Naive thymus-derived CD4-positive, alpha-beta T cell (primary cell): ENCODE measurements at regions of chr2 and their contacts with region 1.

Region 1: DNA sequence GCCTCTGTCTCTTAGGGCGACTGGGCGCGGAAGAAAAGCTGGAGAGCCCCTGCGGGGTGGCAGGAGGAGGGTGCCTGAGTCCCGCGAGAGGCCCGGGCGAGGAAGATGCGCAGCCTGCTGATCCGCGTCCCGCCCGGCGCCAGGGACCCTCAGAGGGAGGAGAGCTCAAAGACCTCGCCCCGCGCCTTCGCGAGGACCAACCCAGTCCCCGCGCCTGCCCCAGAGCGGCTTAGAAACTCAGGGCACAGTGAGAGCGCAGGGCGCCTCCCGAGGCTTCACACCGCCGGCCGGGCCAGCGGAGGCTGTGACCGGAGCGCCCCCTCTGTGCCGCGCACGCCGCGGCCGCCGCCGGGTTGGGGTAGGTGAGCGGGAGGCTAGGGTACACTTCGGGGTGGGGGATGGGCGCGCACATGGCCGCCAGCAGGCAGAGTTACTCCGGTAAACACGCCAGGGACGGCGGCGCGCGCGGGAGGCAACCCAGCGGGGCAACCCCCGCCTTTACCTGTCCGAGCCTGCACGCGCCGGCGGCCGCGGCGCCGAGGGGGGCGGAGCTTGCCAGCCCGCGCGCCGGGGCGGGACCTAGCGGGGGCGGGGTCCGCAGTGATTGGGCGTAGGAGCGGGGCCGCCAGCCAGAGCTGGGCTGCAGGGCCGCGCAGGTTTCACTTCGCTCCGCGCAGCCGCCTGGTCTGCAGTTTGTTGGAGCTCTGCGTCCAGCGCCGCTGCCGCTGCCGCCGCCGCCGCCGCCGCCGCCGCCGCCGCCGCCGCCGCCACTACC is at the start of gene BCL2L11:
- DNase-seq: peak; percentile 78 to 98 (median 85)
- ATAC-seq: peak; percentile 85
- H3K4me3 ChIP-seq: peak within 1 kb of the TSS; percentile 87
- H3K4me3 Mint-ChIP-seq: peak within 1 kb of the TSS; percentile 92 to 96 (median 95)
- H3K27ac ChIP-seq: peak within 1 kb of the TSS; percentile 66
- H3K27ac Mint-ChIP-seq: peak within 1 kb of the TSS; percentile 70 to 89 (median 80)
- H3K4me1 ChIP-seq: peaks cover 19 to 35% of the 10 kb centered on the region in 2 donors
- H3K4me1 Mint-ChIP-seq: peaks cover 27 to 53% (median 37%) of the 10 kb centered on the region in 7 donors
- H3K27me3 ChIP-seq: peaks cover 0 to 16% of the 10 kb centered on the region in 2 donors
- H3K27me3 Mint-ChIP-seq: peaks cover 26 to 52% (median 36%) of the 10 kb centered on the region in 5 donors
- total RNA-seq, gene BCL2L11: 33.1 to 67.6 (median 39.0) TPM

Region 2: DNA sequence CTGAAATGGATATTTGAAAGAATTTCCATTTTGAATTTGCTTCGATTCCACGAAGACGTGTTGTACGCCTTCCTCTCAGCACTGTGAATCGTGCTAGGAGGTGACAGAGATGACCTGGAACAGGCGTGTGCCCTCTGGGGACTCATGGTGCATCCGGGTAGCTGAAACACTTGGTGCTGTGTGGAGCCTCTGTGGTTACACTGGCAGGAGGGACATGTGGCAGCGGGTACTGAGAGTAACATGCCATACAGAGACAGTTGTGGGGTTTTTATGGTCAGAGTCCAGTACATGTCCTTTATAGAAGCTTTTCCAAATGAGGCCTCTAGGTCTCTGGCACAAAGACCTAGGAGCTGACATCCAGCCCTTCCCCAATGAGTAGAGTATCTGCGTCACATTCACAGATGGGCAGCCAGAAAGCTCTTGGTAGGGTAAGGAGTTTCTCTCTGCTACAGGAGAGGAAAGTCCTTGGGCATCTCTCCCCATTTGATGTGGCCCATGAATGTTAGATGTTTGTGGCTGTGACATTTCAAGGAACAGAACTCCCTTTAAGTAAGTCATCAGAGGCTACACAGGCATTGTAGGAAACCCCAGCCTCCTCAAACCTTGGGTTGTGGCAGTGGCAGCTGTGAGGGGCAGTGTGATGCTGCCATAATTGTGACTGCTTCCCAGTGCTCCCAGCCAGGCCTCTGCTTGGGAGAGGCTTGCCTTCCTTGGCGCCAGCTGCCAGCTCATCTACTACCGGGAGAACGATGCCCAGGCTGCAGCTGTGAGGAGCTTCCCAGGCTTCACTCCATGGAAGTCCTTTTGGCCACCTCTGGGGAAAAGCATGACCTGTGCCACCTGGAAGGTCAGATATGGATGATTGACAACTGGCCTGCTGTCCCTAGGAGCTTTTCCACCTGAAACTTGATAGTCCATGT is 307.5 kb before region 1 on chr2:
- CTCF ChIA-PET with region 1: no interaction called
- POLR2A ChIA-PET with region 1: no interaction called
- intact Hi-C with region 1: loop called in 1 of 2 experiments (anchors 2 kb)
- DNase-seq: no peak
- ATAC-seq: no peak
- H3K4me3 ChIP-seq: no peak overlapping the region
- H3K4me3 Mint-ChIP-seq: no peak overlapping the region
- H3K27ac ChIP-seq: no peak overlapping the region
- H3K27ac Mint-ChIP-seq: peak overlapping the region in 1 of 9 donors; percentile 24
- H3K4me1 ChIP-seq: peaks cover 0 to 3% of the 10 kb centered on the region in 2 donors
- H3K4me1 Mint-ChIP-seq: peaks cover 0 to 12% (median 5%) of the 10 kb centered on the region in 7 donors
- H3K27me3 ChIP-seq: no peaks in the 10 kb centered on the region
- H3K27me3 Mint-ChIP-seq: peaks cover 0 to 28% (median 4%) of the 10 kb centered on the region in 5 donors

Region 3: GRCh38 chr2:110931648-110932047 is 188.8 kb before region 1 on chr2:
- CTCF ChIA-PET with region 1: no interaction called
- POLR2A ChIA-PET with region 1: no interaction called
- intact Hi-C with region 1: no loop called
- DNase-seq: no peak
- ATAC-seq: no peak
- H3K4me3 ChIP-seq: no peak overlapping the region
- H3K4me3 Mint-ChIP-seq: no peak overlapping the region
- H3K27ac ChIP-seq: no peak overlapping the region
- H3K27ac Mint-ChIP-seq: no peak overlapping the region
- H3K4me1 ChIP-seq: no peaks in the 10 kb centered on the region
- H3K4me1 Mint-ChIP-seq: no peaks in the 10 kb centered on the region
- H3K27me3 ChIP-seq: no peaks in the 10 kb centered on the region
- H3K27me3 Mint-ChIP-seq: peaks cover 0 to 4% (median 3%) of the 10 kb centered on the region in 5 donors

Region 4: GRCh38 chr2:111157798-111158197 is 37.4 kb after region 1 on chr2:
- CTCF ChIA-PET with region 1: no interaction called
- POLR2A ChIA-PET with region 1: interaction called, 4 read pairs
- intact Hi-C with region 1: loop called in 1 of 2 experiments (anchors 5 kb)
- DNase-seq: no peak
- ATAC-seq: peak; percentile 24
- H3K4me3 ChIP-seq: no peak overlapping the region
- H3K4me3 Mint-ChIP-seq: peak overlapping the region in 2 of 10 donors; percentile 27 to 54
- H3K27ac ChIP-seq: no peak overlapping the region
- H3K27ac Mint-ChIP-seq: peak overlapping the region in 5 of 9 donors; percentile 70 to 94 (median 78)
- H3K4me1 ChIP-seq: peaks cover 0 to 24% of the 10 kb centered on the region in 2 donors
- H3K4me1 Mint-ChIP-seq: peaks cover 22 to 72% (median 58%) of the 10 kb centered on the region in 7 donors
- H3K27me3 ChIP-seq: no peaks in the 10 kb centered on the region
- H3K27me3 Mint-ChIP-seq: peaks cover 0 to 9% (median 0%) of the 10 kb centered on the region in 5 donors

Region 5: DNA sequence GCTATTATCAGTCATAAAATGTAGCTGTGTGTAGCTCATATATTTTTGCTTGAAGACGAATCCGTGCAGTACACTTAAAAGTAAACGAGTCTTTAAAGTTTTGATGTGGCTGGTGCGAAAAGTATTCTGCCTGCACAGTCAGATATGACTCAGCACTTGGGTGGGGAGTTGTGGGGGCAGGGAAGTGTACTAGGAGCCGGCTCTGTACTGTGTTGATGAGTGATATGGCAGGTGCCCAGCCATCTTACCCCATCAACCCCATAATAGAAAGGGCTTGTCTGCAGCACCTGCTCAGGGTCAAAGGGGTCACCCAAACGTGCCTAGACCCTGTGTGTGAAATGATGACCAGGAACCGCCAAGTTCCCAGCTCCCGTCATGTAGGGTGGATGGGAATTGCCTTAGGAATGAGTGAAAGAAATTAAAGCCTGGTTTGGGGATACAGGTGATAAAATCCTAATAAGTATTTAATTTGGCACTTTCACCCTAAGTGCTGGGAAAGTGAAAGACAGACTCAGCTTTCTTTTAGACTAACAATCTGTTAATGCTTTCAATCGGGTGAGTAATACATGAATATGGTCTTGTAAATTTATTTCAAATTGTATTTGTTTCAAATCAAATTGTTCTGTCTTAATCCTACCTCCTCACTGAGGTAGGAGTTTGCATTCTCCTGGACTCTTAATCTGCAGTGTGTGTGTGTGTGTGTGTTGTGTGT is 48.2 kb after region 1 on chr2:
- CTCF ChIA-PET with region 1: no interaction called
- POLR2A ChIA-PET with region 1: no interaction called
- intact Hi-C with region 1: no loop called
- DNase-seq: peak in 4 of 9 donors; percentile 12 to 69 (median 15)
- ATAC-seq: peak; percentile 53
- H3K4me3 ChIP-seq: no peak overlapping the region
- H3K4me3 Mint-ChIP-seq: no peak overlapping the region
- H3K27ac ChIP-seq: no peak overlapping the region
- H3K27ac Mint-ChIP-seq: peak overlapping the region in 2 of 9 donors; percentile 36 to 56
- H3K4me1 ChIP-seq: peaks cover 5 to 6% of the 10 kb centered on the region in 2 donors
- H3K4me1 Mint-ChIP-seq: peaks cover 0 to 22% (median 0%) of the 10 kb centered on the region in 7 donors
- H3K27me3 ChIP-seq: no peaks in the 10 kb centered on the region
- H3K27me3 Mint-ChIP-seq: peaks cover 0 to 32% (median 0%) of the 10 kb centered on the region in 5 donors

Region 6: DNA sequence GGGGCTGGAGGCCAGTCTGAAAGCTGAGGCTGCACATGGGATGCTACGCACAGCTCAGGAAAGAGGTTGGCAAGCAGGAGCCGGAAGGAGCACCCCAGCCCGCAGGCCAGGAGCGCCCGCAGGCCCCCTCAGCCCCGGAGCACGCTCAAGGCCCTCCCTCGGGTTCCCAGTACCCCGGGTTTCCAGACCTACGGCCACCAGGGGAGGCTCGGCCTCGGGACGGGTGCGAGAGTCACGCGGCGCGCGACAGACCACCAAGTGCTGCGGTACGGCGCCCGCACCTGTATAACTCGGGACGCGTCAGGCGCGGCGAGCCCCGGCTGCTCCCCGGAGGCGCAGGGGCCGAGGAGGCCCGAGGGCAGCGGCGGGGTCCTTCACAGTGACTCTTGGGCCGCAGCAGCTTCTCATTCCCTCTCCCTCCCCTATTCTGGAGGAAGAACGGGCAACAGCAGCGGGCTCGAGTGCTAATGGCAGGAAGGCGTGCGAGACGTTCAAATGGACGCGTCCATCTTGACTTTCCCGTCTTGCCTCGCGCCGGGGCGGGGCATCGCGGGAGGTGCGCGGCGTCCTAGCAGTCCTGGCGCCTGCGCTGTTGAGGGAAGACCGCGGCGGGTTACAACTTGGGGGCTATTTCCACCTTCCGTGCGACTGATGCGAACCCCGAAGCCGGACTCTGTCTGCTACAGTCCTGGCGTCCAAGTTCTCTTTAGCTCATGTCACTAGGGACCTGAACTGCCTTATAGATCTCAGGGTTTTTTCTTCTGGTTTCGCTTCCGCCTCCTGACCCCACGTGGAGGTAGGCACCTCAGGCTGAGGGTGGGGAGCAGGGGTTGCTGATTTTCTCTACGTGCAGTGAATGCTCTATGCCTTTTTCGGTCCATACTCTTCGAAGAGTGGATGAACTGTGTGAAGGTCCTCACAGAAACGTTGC is 763.5 kb after region 1 on chr2 and contains the start of gene ANAPC1:
- CTCF ChIA-PET with region 1: no interaction called
- POLR2A ChIA-PET with region 1: no interaction called
- intact Hi-C with region 1: loop called in 1 of 2 experiments (anchors 5 kb)
- DNase-seq: peak; percentile 75 to 87 (median 84)
- ATAC-seq: peak; percentile 98
- H3K4me3 ChIP-seq: peak within 1 kb of the TSS; percentile 69
- H3K4me3 Mint-ChIP-seq: peak within 1 kb of the TSS; percentile 92 to 99 (median 96)
- H3K27ac ChIP-seq: peak within 1 kb of the TSS; percentile 85
- H3K27ac Mint-ChIP-seq: peak within 1 kb of the TSS; percentile 92 to 98 (median 96)
- H3K4me1 ChIP-seq: peaks cover 0 to 10% of the 10 kb centered on the region in 2 donors
- H3K4me1 Mint-ChIP-seq: peaks cover 2 to 26% (median 13%) of the 10 kb centered on the region in 7 donors
- H3K27me3 ChIP-seq: no peaks in the 10 kb centered on the region
- H3K27me3 Mint-ChIP-seq: no peaks in the 10 kb centered on the region
- total RNA-seq, gene ANAPC1: 51.8 to 77.2 (median 62.7) TPM

Region 7: GRCh38 chr2:112275306-112275886 is 1155.0 kb after region 1 on chr2 and contains the start of gene ZC3H6:
- CTCF ChIA-PET with region 1: no interaction called
- POLR2A ChIA-PET with region 1: no interaction called
- intact Hi-C with region 1: loop called (anchors 5 to 10 kb)
- DNase-seq: peak; percentile 96 to 100 (median 100)
- ATAC-seq: peak; percentile 98
- H3K4me3 ChIP-seq: peak within 1 kb of the TSS; percentile 99
- H3K4me3 Mint-ChIP-seq: peak within 1 kb of the TSS; percentile 85 to 95 (median 94)
- H3K27ac ChIP-seq: peak within 1 kb of the TSS; percentile 100
- H3K27ac Mint-ChIP-seq: peak within 1 kb of the TSS; percentile 90 to 99 (median 98)
- H3K4me1 ChIP-seq: peaks cover 14 to 18% of the 10 kb centered on the region in 2 donors
- H3K4me1 Mint-ChIP-seq: peaks cover 9 to 36% (median 25%) of the 10 kb centered on the region in 7 donors
- H3K27me3 ChIP-seq: no peaks in the 10 kb centered on the region
- H3K27me3 Mint-ChIP-seq: peaks cover 0 to 3% (median 0%) of the 10 kb centered on the region in 5 donors
- total RNA-seq, gene ZC3H6: 11.8 to 42.1 (median 23.7) TPM